ENCODE measurements at regions of chr3 and their contacts with region 1.

Region 1: DNA sequence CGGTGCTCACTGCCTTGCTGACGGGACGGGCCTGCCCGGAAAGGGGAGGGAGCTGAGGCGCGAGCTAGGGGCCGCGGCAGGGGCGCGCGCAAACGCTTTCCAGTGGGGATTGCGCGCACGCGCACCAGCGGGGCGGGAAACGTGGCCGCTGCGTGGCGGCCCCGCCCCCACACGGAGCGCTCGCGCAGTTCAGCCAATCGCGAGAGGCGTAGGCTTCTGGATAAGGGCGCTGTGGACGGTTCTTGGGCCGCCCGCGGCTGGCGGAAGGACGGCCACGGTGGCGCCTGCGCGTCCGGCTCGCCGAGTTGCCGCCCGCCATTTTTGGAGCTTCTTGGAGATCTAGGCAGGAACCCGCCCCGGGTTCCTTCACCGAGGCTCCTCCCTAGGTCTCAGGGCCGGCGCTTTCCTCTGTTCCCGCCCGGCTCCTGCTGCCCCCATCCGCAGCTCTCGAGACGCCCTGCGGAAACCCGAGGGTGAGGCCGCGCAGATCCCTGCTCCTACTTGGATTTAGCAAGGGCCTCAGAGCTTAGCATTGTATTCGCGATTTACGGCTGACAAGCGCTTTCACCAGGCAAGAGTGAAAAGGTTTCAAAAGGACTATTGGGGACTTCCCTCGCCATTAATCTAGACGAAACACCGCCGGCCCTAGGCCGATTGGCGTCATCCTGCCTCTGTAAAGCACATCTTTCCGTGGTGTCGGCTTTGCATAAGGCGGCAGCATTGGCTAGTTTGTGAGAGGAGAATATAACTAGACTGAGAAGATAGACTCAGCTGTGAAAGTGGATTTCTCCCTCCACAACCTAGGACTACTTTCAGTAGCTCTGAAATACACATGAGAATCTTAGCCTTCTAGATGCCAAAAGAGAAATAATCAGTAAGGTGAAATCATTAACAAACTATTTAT is 496 bp upstream of the STAG1 start:
- DNase-seq: peak; percentile 99 to 100 (median 99)
- ATAC-seq: peak; percentile 94 to 97 (median 95)
- H3K4me3 ChIP-seq: peak overlapping the region; percentile 55 to 95 (median 70)
- H3K27ac ChIP-seq: peak overlapping the region; percentile 93 to 100 (median 98)
- H3K4me1 ChIP-seq: peaks cover 0 to 41% (median 26%) of the 10 kb centered on the region in 12 donors
- H3K27me3 ChIP-seq: no peaks in the 10 kb centered on the region
- CTCF ChIP-seq: peak in 6 of 12 donors; percentile 1 to 50 (median 38)
- POLR2A ChIP-seq: peak in 1 of 2 donors; percentile 78

Region 2: GRCh38 chr3:136075218-136075808 is 677.4 kb before region 1 on chr3:
- intact Hi-C with region 1: loop called (anchors 1 to 10 kb)
- DNase-seq: peak; percentile 54 to 68 (median 67)
- ATAC-seq: peak; percentile 78 to 84 (median 80)
- H3K4me3 ChIP-seq: no peak overlapping the region
- H3K27ac ChIP-seq: peak overlapping the region in 8 of 12 donors; percentile 0 to 59 (median 36)
- H3K4me1 ChIP-seq: peaks cover 0 to 33% (median 17%) of the 10 kb centered on the region in 12 donors
- H3K27me3 ChIP-seq: no peaks in the 10 kb centered on the region
- CTCF ChIP-seq: peak; percentile 78 to 97 (median 93)
- POLR2A ChIP-seq: no peak

Region 3: DNA sequence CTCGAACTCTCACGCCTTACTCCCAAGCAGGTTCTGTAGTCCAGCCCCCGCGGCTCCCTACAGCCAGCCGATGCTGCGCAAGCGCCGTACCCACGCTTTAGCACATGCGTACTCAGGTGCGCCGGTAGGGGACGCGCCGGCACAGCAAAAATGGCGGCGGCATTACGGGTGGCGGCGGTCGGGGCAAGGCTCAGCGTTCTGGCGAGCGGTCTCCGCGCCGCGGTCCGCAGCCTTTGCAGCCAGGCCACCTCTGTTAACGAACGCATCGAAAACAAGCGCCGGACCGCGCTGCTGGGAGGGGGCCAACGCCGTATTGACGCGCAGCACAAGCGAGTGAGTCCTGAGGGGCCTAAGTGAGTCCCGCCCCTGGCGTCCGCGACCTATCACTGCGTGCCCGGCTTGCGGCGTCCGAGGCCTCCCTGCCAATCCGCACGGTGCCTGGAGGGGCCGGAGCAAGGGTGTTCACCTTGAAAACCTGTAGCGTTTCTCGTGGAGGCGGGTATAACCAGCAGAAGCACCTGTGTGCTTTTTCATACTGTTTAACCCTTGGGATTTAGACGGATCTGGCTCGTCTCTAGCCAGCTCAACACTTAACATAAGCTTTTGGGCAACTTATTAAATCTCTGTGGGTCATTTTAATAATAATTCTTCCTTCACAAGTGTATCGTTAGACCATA is 502.3 kb before region 1 on chr3 and contains the start of gene PCCB:
- intact Hi-C with region 1: loop called in 3 of 10 experiments (anchors 2 to 5 kb)
- DNase-seq: peak; percentile 92 to 98 (median 96)
- ATAC-seq: peak; percentile 98 to 99 (median 98)
- H3K4me3 ChIP-seq: peak within 1 kb of the TSS; percentile 35 to 94 (median 73)
- H3K27ac ChIP-seq: peak within 1 kb of the TSS; percentile 77 to 98 (median 93)
- H3K4me1 ChIP-seq: peaks cover 0 to 21% (median 12%) of the 10 kb centered on the region in 12 donors
- H3K27me3 ChIP-seq: no peaks in the 10 kb centered on the region
- CTCF ChIP-seq: peak; percentile 74 to 92 (median 86)
- POLR2A ChIP-seq: peak in 1 of 2 donors; percentile 62
- total RNA-seq, gene PCCB: 58.5 to 154 (median 103) TPM

Region 4: GRCh38 chr3:136545664-136546268 is 206.9 kb before region 1 on chr3:
- intact Hi-C with region 1: loop called in 3 of 10 experiments (anchors 5 to 10 kb)
- DNase-seq: no peak
- ATAC-seq: no peak
- H3K4me3 ChIP-seq: no peak overlapping the region
- H3K27ac ChIP-seq: no peak overlapping the region
- H3K4me1 ChIP-seq: peaks cover 0 to 13% (median 0%) of the 10 kb centered on the region in 12 donors
- H3K27me3 ChIP-seq: no peaks in the 10 kb centered on the region
- CTCF ChIP-seq: peak in 8 of 12 donors; percentile 14 to 44 (median 30)
- POLR2A ChIP-seq: no peak

Region 5: DNA sequence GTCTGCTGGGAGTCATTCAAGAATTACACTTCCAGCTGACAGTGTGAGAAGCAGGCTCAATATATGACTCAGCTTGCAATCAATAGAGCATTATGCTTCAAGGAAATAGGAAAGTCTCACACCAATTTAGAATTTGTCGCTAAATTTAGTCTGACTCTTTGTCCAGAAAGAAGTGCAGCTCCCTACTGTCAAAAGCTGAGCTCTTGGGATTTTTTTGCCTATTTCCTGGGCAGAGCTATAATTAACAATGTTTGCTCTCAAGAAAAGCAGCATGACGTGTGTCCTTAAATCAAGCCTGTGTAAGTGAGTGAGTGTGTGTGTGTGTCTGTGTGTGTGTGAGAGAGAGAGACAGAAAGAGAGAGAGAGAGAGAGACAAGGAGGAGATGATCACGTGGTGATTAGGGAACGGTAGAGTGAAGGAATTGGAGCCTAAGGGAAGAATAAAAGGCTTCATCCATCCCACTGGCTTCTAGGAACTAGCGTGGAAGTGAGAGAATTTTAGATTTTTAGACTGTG is 49.9 kb after region 1 on chr3:
- intact Hi-C with region 1: loop called in 2 of 10 experiments (anchors 5 to 10 kb)
- DNase-seq: peak in 2 of 5 donors; percentile 44 to 48
- ATAC-seq: peak; percentile 71 to 93 (median 83)
- H3K4me3 ChIP-seq: peak overlapping the region in 2 of 12 donors; percentile 6 to 14
- H3K27ac ChIP-seq: peak overlapping the region in 10 of 12 donors; percentile 4 to 72 (median 25)
- H3K4me1 ChIP-seq: peaks cover 0 to 22% (median 17%) of the 10 kb centered on the region in 12 donors
- H3K27me3 ChIP-seq: no peaks in the 10 kb centered on the region
- CTCF ChIP-seq: no peak
- POLR2A ChIP-seq: no peak

Region 6: GRCh38 chr3:136861890-136862616 is 109.4 kb after region 1 on chr3 and contains the start of gene NCK1:
- intact Hi-C with region 1: loop called in 6 of 10 experiments (anchors 1 to 10 kb)
- DNase-seq: peak; percentile 99
- ATAC-seq: peak; percentile 99 to 100 (median 99)
- H3K4me3 ChIP-seq: peak within 1 kb of the TSS; percentile 61 to 95 (median 83)
- H3K27ac ChIP-seq: peak within 1 kb of the TSS; percentile 72 to 95 (median 90)
- H3K4me1 ChIP-seq: peaks cover 0 to 51% (median 23%) of the 10 kb centered on the region in 12 donors
- H3K27me3 ChIP-seq: no peaks in the 10 kb centered on the region
- CTCF ChIP-seq: peak in 5 of 12 donors; percentile 6 to 26 (median 17)
- POLR2A ChIP-seq: peak; percentile 19 to 92
- total RNA-seq, gene NCK1: 18.7 to 36.0 (median 23.4) TPM

Measured in heart left ventricle (tissue), 16 donors.